ENCODE measurements at regions of chr7 and their contacts with region 1.

Region 1: DNA sequence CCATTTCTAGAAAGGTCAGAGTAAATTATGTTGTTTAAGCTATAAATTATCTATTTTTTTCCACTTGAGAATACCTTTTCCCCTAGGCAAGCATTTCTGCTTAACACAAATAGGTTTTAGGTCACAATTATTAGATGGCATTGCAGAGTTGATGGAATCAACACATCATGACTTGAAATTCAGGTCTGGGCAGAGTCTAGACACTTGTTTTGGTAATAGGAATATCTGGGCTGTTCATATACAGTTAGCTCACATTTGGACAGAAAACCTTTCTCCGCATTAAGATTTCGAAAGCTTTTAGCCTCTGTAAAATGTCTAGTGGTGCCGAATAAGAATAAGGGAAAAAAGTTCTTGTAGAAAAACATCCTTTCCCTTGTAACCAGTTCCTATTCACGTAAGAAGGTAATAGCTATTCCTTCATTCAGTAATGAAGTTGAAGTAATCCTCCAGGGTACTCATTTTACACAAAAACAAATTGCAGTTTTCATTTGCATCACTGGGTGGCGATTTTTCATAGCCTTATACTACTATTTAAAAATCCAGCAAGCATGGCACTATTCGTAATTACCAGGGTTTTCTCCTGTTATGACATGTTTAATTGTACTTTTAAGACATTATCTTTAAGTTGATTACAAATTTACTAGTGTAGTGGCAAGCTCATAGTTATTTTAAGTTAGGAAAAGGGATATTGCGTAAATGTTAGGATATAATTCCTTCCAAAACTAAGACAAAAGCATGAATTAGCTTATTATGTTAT is 37.0 kb downstream of the RPA3 start:
- DNase-seq: peak; percentile 53
- H3K4me3 Mint-ChIP-seq: no peak overlapping the region
- H3K27ac Mint-ChIP-seq: no peak overlapping the region
- H3K4me1 Mint-ChIP-seq: peaks cover 18% of the 10 kb centered on the region
- H3K27me3 Mint-ChIP-seq: no peaks in the 10 kb centered on the region

Region 2: DNA sequence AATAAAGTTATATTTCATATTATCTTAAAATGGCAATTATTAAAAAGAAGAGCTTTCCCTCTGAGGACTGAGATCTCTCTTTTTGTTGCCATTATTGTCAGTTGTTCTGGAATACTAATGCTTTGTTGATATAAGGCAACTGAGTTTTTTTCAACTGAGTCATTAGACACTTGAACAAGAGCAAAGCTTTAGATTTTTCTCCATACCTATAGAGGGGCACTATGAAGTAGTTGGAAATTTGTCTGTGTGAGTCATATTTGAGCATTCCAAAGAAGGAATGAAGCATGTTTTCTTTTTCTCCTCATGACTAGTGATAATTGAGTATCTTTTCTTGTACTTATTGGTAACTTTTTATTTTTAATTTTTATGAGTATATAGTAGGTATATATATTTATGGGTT is 12.5 kb after region 1 on chr7:
- CTCF ChIA-PET with region 1: interaction called, 27 read pairs
- DNase-seq: no peak
- H3K4me3 Mint-ChIP-seq: no peak overlapping the region
- H3K27ac Mint-ChIP-seq: no peak overlapping the region
- H3K4me1 Mint-ChIP-seq: no peaks in the 10 kb centered on the region
- H3K27me3 Mint-ChIP-seq: no peaks in the 10 kb centered on the region

Region 3: DNA sequence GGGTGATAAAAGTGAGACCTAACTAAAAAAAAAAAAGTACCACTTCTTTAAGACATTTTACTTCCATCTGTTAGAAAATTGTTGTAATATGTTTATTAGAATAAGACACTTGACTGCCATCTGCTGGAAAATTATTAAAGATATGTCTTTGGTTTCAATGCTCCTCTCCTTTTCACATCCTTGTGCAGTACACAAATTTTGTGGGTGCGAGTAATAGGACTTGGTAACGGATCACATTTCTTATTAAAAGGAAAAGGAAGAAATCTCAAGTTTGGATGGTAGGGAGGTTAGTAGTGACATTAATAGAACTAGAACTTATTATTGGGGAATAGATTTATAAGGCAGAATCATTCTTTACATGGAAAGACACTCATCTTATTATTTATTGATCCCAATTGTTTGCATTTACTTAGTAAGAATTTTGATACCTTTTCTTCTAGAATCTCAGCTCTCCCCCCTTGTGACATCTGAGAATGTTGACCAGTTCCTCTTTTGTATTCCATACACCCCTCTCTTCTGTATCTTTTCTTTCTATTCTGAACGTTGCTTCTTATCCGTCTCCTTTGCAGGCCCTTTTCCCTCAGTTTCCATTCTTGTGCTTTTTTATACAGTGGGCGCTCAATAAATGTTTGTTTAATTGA is 80.1 kb after region 1 on chr7:
- CTCF ChIA-PET with region 1: interaction called, 62 read pairs
- DNase-seq: no peak
- H3K4me3 Mint-ChIP-seq: peak overlapping the region; percentile 85
- H3K27ac Mint-ChIP-seq: peak overlapping the region; percentile 97
- H3K4me1 Mint-ChIP-seq: peaks cover 39% of the 10 kb centered on the region
- H3K27me3 Mint-ChIP-seq: no peaks in the 10 kb centered on the region

Region 4: DNA sequence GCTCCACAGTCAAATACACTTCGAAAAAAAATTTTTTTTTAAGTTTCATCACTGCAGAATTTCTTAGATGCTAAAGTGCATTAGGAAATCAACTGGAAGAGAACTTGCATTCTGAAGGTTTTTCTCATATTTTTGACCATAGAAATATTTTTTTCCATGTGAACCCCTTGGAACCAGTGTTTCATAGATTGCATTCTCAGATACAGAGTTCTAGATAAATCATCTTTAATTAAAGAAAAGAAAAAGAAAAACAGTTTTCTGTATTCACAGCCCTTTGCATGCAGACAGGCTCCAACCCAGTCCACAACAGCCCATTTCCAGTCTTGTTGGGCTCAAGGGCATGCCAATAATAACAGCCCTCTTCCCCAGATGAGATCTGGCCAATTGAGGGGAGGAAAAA is 112.6 kb after region 1 on chr7:
- CTCF ChIA-PET with region 1: no interaction called
- DNase-seq: no peak
- H3K4me3 Mint-ChIP-seq: no peak overlapping the region
- H3K27ac Mint-ChIP-seq: no peak overlapping the region
- H3K4me1 Mint-ChIP-seq: peaks cover 12% of the 10 kb centered on the region
- H3K27me3 Mint-ChIP-seq: no peaks in the 10 kb centered on the region

Region 5: GRCh38 chr7:7959979-7960670 is 278.8 kb after region 1 on chr7:
- CTCF ChIA-PET with region 1: no interaction called
- DNase-seq: no peak
- H3K4me3 Mint-ChIP-seq: no peak overlapping the region
- H3K27ac Mint-ChIP-seq: no peak overlapping the region
- H3K4me1 Mint-ChIP-seq: peaks cover 4% of the 10 kb centered on the region
- H3K27me3 Mint-ChIP-seq: no peaks in the 10 kb centered on the region

Region 6: GRCh38 chr7:8035647-8036518 is 354.5 kb after region 1 on chr7:
- CTCF ChIA-PET with region 1: interaction called, 27 read pairs
- DNase-seq: no peak
- H3K4me3 Mint-ChIP-seq: no peak overlapping the region
- H3K27ac Mint-ChIP-seq: no peak overlapping the region
- H3K4me1 Mint-ChIP-seq: peaks cover 12% of the 10 kb centered on the region
- H3K27me3 Mint-ChIP-seq: no peaks in the 10 kb centered on the region

Region 7: DNA sequence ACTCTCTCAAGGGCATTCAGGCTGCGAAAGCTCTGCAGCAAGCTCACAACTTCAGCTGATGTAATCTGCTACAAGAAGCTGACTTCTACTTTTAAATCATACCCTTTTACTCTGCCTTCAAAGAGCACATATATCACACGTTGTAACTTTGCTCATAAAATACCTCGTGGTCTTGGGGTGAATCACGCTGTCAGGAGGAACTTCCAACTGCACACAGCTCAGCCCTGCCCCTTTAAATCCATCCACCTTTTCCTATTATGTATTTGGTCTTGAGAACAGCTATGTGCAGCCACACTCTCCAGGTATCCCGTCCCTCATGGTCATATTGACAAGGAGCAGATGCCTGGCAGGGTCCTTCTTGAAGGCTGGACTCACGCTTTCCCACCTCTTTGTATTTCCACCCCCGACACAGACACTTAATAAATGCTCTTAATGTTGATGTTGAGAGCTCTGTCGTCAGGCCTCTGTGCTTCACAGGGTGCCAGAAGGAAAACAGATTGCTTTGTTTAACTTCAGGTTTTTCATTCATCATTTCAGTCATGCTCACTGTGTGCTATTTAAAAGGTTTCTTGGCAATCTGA is 533.0 kb after region 1 on chr7:
- CTCF ChIA-PET with region 1: interaction called, 14 read pairs
- DNase-seq: no peak
- H3K4me3 Mint-ChIP-seq: no peak overlapping the region
- H3K27ac Mint-ChIP-seq: no peak overlapping the region
- H3K4me1 Mint-ChIP-seq: peaks cover 2% of the 10 kb centered on the region
- H3K27me3 Mint-ChIP-seq: peaks cover 3% of the 10 kb centered on the region

Region 8: GRCh38 chr7:8710124-8710523 is 1028.8 kb after region 1 on chr7:
- CTCF ChIA-PET with region 1: no interaction called
- DNase-seq: no peak
- H3K4me3 Mint-ChIP-seq: no peak overlapping the region
- H3K27ac Mint-ChIP-seq: no peak overlapping the region
- H3K4me1 Mint-ChIP-seq: no peaks in the 10 kb centered on the region
- H3K27me3 Mint-ChIP-seq: no peaks in the 10 kb centered on the region